ENCODE measurements at regions of chr5 and their contacts with region 1.

Region 1: DNA sequence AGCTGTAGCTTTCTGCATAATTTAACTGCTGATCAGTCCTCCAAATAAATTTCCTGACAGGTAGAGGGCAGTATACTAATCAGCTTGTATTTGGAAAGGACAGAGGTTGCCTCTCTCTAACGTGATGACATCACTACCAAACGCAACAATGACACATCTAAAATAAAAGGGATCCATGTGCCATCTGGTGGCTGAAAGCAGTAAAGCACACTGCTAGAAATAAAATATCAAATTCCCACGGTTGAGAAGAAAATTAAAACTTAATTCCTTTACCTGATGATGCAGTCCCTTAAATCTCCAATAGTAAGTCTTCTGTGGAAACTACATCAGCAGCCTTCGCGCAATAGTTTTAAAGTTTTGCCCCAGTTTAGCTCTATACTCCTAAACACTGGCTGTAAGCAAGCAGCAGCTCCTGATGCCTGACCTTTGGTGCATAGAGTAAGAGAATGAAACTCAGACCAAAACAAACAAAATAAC is 54.5 kb downstream of the DIAPH1 start:
- DNase-seq: peak; percentile 82
- ATAC-seq: peak; percentile 85
- H3K4me3 Mint-ChIP-seq: no peak overlapping the region
- H3K27ac Mint-ChIP-seq: peak overlapping the region; percentile 80
- H3K4me1 Mint-ChIP-seq: peaks cover 18% of the 10 kb centered on the region
- H3K27me3 Mint-ChIP-seq: no peaks in the 10 kb centered on the region

Region 2: GRCh38 chr5:141369994-141370848 is 194.0 kb before region 1 on chr5 and contains the start of gene PCDHGB3:
- CTCF ChIA-PET with region 1: interaction called, 14 read pairs
- POLR2A ChIA-PET with region 1: no interaction called
- DNase-seq: peak; percentile 52
- ATAC-seq: peak; percentile 57
- H3K4me3 Mint-ChIP-seq: peak within 1 kb of the TSS; percentile 63
- H3K27ac Mint-ChIP-seq: no peak within 1 kb of the TSS
- H3K4me1 Mint-ChIP-seq: peaks cover 8% of the 10 kb centered on the region
- H3K27me3 Mint-ChIP-seq: peaks cover 45% of the 10 kb centered on the region
- total RNA-seq, gene PCDHGB3: 0.16 to 0.26 TPM

Region 3: DNA sequence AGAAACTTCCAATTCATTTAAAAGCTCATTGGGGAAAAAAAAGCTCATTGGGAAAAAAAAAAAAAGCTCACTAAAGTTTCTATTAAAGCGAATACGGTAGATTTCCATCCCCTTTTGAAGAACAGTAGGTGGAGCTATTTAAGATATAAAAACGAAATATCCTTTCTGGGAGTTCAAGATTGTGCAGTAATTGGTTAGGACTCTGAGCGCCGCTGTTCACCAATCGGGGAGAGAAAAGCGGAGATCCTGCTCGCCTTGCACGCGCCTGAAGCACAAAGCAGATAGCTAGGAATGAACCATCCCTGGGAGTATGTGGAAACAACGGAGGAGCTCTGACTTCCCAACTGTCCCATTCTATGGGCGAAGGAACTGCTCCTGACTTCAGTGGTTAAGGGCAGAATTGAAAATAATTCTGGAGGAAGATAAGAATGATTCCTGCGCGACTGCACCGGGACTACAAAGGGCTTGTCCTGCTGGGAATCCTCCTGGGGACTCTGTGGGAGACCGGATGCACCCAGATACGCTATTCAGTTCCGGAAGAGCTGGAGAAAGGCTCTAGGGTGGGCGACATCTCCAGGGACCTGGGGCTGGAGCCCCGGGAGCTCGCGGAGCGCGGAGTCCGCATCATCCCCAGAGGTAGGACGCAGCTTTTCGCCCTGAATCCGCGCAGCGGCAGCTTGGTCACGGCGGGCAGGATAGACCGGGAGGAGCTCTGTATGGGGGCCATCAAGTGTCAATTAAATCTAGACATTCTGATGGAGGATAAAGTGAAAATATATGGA is 133.7 kb before region 1 on chr5 and contains the start of gene PCDHGA12:
- CTCF ChIA-PET with region 1: interaction called, 23 read pairs
- POLR2A ChIA-PET with region 1: no interaction called
- DNase-seq: peak; percentile 45
- ATAC-seq: no peak
- H3K4me3 Mint-ChIP-seq: peak within 1 kb of the TSS; percentile 63
- H3K27ac Mint-ChIP-seq: peak within 1 kb of the TSS; percentile 62
- H3K4me1 Mint-ChIP-seq: peaks cover 18% of the 10 kb centered on the region
- H3K27me3 Mint-ChIP-seq: peaks cover 40% of the 10 kb centered on the region
- total RNA-seq, gene PCDHGA12: not detected

Region 4: GRCh38 chr5:141501761-141502160 is 62.5 kb before region 1 on chr5:
- CTCF ChIA-PET with region 1: no interaction called
- POLR2A ChIA-PET with region 1: no interaction called
- DNase-seq: no peak
- ATAC-seq: no peak
- H3K4me3 Mint-ChIP-seq: no peak overlapping the region
- H3K27ac Mint-ChIP-seq: no peak overlapping the region
- H3K4me1 Mint-ChIP-seq: no peaks in the 10 kb centered on the region
- H3K27me3 Mint-ChIP-seq: peaks cover 5% of the 10 kb centered on the region

Region 5: GRCh38 chr5:141532726-141533125 is 31.5 kb before region 1 on chr5:
- CTCF ChIA-PET with region 1: interaction called, 14 read pairs
- POLR2A ChIA-PET with region 1: no interaction called
- DNase-seq: no peak
- ATAC-seq: no peak
- H3K4me3 Mint-ChIP-seq: no peak overlapping the region
- H3K27ac Mint-ChIP-seq: no peak overlapping the region
- H3K4me1 Mint-ChIP-seq: no peaks in the 10 kb centered on the region
- H3K27me3 Mint-ChIP-seq: no peaks in the 10 kb centered on the region

Region 6: GRCh38 chr5:141618804-141619554 is 54.7 kb after region 1 on chr5 and contains the start of gene DIAPH1:
- CTCF ChIA-PET with region 1: interaction called, 48 read pairs
- POLR2A ChIA-PET with region 1: interaction called, 4 read pairs
- DNase-seq: peak; percentile 98
- ATAC-seq: peak; percentile 90
- H3K4me3 Mint-ChIP-seq: peak within 1 kb of the TSS; percentile 98
- H3K27ac Mint-ChIP-seq: peak within 1 kb of the TSS; percentile 98
- H3K4me1 Mint-ChIP-seq: peaks cover 59% of the 10 kb centered on the region
- H3K27me3 Mint-ChIP-seq: no peaks in the 10 kb centered on the region
- total RNA-seq, gene DIAPH1: 281 to 286 TPM

Measured in activated CD8-positive, alpha-beta T cell treated with anti-CD3 and anti-CD28 coated beads, Interleukin-2, amount 10 ng/mL, durations not matched to agents 7 days and 5 days (primary cell).